ENCODE measurements at regions of chr7 and their contacts with region 1.

Region 1: DNA sequence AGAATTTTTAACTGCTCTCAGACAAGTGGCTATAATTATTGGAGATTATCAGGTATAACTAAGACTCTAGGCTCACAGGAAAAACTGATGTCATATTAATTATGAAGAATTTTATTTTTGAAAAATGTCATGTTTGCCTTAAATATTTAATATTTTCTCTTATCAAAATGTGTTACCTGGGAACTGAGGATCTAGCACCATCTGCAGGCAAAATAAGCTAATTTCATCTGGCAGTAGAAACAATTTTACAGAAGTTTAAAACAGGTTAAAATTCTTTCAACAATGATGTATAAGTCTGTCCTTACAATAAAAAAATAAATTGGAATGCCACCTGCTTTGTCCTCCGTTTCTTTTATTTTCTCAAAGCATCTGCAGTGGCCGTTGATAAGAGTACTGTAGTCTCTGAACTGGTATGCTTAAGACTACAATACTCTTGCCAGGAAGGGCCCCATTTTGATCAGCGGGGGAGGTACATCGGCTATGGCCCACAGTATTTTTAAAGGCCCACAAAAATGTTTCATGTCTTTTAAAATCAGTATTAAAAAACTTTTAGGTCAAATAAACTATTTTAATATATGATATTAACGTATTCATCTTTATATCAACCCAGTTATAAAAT is 81.3 kb downstream of the VWDE start:
- DNase-seq: no peak
- ATAC-seq: peak in 3 of 4 donors; percentile 46 to 52 (median 50)
- H3K4me3 ChIP-seq: no peak overlapping the region
- H3K27ac ChIP-seq: no peak overlapping the region
- H3K4me1 ChIP-seq: no peaks in the 10 kb centered on the region
- H3K27me3 ChIP-seq: no peaks in the 10 kb centered on the region
- CTCF ChIP-seq: peak in 3 of 4 donors; percentile 46 to 56 (median 47)

Region 2: DNA sequence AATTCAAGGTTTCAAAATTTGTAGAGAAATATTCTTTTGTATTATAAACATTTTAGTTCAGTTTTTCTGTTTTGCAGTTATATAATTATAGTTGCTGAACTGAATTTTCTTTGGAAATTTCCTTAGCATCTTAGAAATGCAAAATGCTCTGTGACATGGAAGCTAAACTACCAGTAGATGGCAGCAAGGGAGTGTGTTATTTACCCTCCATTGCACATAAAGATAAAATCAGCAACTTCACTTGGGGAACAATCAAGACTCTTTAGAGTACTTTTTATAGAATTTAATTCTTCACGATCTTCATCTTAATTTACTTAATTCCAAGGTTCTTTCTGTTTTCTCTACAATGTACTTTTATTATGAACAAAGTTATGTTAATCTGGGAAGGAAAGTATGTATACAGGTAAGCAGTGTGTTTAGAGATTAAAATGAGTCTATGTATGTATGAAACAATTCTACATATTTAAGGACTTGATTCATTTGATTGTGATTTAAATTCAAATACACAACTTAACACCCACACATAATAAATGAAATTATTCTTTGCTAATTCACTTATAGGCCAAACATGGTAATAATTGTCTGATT is 894.6 kb before region 1 on chr7:
- intact Hi-C with region 1: loop called in 1 of 3 experiments (anchors 10 kb)
- DNase-seq: peak in 1 of 6 donors; percentile 13
- ATAC-seq: peak; percentile 56 to 88 (median 82)
- H3K4me3 ChIP-seq: no peak overlapping the region
- H3K27ac ChIP-seq: no peak overlapping the region
- H3K4me1 ChIP-seq: no peaks in the 10 kb centered on the region
- H3K27me3 ChIP-seq: no peaks in the 10 kb centered on the region
- CTCF ChIP-seq: peak; percentile 25 to 60 (median 54)

Region 3: DNA sequence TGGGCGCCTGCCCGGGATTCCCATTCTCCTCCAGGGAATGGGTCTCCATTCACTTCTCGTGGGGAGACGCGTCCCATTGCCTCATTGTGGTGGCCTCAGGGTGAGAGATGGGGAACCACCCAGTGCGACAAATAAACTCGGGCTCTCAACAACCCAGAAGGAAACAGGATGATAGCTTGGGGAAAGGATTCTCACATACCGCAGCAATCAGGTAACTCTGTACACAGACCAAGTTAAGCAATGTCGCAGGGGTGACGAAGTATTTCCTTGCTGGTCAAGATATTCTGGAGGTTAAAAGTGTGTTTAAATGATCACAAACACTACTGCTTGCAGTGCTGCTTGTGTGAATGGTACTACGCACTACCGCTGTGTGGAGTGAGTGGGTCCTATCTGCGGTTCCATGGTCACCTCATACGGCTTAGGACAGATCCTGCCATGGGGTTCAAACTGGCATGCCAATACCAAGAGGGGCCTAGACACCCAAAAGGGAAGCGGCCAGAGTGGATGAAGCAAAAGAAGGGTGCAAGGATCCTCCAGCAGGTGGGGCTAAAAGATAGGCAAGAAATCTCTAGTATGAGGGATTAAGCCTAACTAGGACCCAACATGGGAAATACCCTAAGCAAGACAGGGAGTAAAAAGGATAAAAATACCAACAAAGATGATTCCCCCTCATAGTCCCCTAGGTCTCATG is 255.1 kb before region 1 on chr7:
- intact Hi-C with region 1: loop called (anchors 5 to 10 kb)
- DNase-seq: peak in 4 of 6 donors; percentile 13 to 64 (median 21)
- ATAC-seq: peak; percentile 64 to 94 (median 90)
- H3K4me3 ChIP-seq: no peak overlapping the region
- H3K27ac ChIP-seq: no peak overlapping the region
- H3K4me1 ChIP-seq: no peaks in the 10 kb centered on the region
- H3K27me3 ChIP-seq: no peaks in the 10 kb centered on the region
- CTCF ChIP-seq: peak; percentile 31 to 60 (median 40)

Region 4: DNA sequence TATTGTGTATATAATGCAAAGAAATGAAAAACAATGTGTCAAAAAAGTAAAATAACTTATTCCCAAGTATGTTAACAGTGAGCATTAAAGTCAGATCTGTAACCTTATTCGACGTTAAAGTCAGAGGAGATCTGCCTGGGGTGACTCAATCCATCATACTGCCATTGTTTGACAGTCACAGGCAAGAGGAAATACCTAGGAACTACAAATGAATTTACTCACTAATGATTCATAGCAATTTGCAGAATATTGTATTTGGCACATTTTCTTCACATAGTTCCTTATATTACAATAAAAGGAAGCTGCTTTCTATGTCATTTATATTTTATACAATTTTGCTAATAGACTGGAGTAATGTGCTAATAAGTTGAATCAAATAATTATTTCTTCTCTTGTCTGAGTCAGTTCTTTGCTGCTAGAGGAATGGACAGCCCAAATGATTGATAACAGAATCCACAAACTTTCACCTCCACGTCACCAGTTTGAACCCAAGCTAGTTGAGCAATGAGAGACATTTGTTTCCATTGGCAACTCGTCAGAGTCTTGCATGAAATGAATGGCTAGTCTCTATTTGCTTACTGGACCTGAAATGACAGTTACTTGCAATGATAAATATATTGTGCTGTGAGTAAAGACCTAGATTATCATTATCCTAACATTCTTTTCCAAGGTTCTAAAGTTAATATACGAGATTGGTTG is 159.8 kb before region 1 on chr7:
- intact Hi-C with region 1: no loop called
- DNase-seq: no peak
- ATAC-seq: peak in 1 of 4 donors; percentile 34
- H3K4me3 ChIP-seq: no peak overlapping the region
- H3K27ac ChIP-seq: no peak overlapping the region
- H3K4me1 ChIP-seq: no peaks in the 10 kb centered on the region
- H3K27me3 ChIP-seq: no peaks in the 10 kb centered on the region
- CTCF ChIP-seq: no peak